Naive thymus-derived CD4-positive, alpha-beta T cell (primary cell): ENCODE measurements at regions of chr9 and their contacts with region 1.

Region 1: GRCh38 chr9:130593020-130593419 is 13.6 kb downstream of the FUBP3 start:
- DNase-seq: no peak
- ATAC-seq: no peak
- H3K4me3 ChIP-seq: no peak overlapping the region
- H3K4me3 Mint-ChIP-seq: no peak overlapping the region
- H3K27ac ChIP-seq: no peak overlapping the region
- H3K27ac Mint-ChIP-seq: no peak overlapping the region
- H3K4me1 ChIP-seq: no peaks in the 10 kb centered on the region
- H3K4me1 Mint-ChIP-seq: peaks cover 5 to 36% (median 20%) of the 10 kb centered on the region in 7 donors
- H3K27me3 ChIP-seq: no peaks in the 10 kb centered on the region
- H3K27me3 Mint-ChIP-seq: no peaks in the 10 kb centered on the region

Region 2: GRCh38 chr9:130606887-130607600 is 14.0 kb after region 1 on chr9:
- CTCF ChIA-PET with region 1: interaction called, 10 read pairs
- POLR2A ChIA-PET with region 1: no interaction called
- intact Hi-C with region 1: no loop called
- DNase-seq: no peak
- ATAC-seq: no peak
- H3K4me3 ChIP-seq: no peak overlapping the region
- H3K4me3 Mint-ChIP-seq: no peak overlapping the region
- H3K27ac ChIP-seq: no peak overlapping the region
- H3K27ac Mint-ChIP-seq: no peak overlapping the region
- H3K4me1 ChIP-seq: no peaks in the 10 kb centered on the region
- H3K4me1 Mint-ChIP-seq: peaks cover 0 to 8% (median 5%) of the 10 kb centered on the region in 7 donors
- H3K27me3 ChIP-seq: no peaks in the 10 kb centered on the region
- H3K27me3 Mint-ChIP-seq: no peaks in the 10 kb centered on the region